Mucosa of descending colon (tissue), 3 donors: ENCODE measurements at regions of chr4 and their contacts with region 1.

Region 1: DNA sequence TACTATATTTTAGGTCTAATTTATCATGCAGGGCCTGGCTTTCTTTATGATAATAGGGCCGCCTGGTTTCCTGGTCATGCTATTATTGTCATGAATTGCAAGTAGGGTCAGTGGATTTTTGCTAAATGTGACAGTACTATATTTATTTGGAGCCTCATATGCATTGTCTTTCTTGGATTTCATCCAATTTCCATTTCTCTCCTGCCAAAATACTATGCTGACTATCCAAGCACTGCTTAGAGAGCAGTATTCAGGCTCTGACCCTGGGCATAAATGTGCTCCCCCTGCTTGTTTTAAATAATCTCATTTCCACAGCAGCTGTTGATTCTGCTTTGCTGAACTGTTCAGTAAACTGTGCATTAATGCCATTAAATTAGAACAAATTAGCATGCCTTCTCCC is 269.3 kb downstream of the GPM6A start:
- DNase-seq: no peak
- ATAC-seq: no peak
- H3K4me3 ChIP-seq: no peak overlapping the region
- H3K4me1 ChIP-seq: no peaks in the 10 kb centered on the region
- CTCF ChIP-seq: no peak

Region 2: DNA sequence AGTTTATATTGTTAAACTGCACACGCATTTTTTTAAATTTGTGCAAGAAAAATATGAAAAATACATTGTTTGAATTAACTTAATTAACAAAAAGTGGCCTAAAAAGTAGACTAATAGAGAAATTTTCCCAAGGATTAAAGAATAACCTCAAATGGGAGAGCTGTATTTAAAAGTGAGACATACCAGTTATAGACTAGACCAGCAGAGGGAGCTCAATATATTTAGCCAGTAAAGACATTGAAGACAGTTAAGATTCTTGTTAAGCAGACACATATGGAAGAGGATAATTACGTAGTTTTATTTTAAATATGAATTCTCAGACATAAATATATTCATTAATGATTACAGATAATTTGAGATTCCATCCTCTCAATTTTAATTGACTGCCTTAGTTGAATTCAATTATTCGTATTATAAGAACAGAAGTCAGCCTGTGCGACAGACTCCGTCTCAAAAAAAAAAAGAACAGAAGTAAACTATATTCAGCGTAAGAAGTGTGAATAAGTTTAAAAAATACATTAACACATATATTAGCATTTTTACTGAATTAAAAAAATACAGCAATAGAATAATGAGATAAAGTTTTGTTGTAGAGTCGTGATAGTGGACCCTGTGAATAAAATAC is 778.6 kb before region 1 on chr4:
- intact Hi-C with region 1: loop called in 1 of 2 experiments (anchors 10 kb)
- DNase-seq: peak in 1 of 3 donors; percentile 7
- ATAC-seq: peak; percentile 41
- H3K4me3 ChIP-seq: no peak overlapping the region
- H3K4me1 ChIP-seq: no peaks in the 10 kb centered on the region
- CTCF ChIP-seq: no peak

Region 3: DNA sequence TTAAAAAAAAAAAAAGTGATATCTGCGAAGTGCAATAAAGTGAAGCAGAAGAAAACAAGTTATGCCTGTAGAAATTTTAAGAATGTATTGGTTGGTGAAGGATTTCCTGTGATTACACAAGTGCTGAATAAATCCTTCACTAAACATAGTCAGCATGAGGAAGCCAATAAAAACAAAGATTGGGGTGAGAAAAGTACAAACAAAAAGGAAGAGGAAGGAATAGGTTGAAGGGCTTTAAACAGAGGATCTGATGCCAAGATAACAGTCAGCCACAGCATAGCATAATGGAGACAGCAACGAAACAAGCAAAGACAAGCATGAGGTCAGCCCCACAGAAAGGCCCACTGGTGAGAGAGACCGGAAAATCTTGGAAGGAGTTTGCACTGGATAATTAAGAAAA is 252.4 kb before region 1 on chr4:
- intact Hi-C with region 1: no loop called
- DNase-seq: no peak
- ATAC-seq: no peak
- H3K4me3 ChIP-seq: no peak overlapping the region
- H3K4me1 ChIP-seq: no peaks in the 10 kb centered on the region
- CTCF ChIP-seq: no peak

Region 4: DNA sequence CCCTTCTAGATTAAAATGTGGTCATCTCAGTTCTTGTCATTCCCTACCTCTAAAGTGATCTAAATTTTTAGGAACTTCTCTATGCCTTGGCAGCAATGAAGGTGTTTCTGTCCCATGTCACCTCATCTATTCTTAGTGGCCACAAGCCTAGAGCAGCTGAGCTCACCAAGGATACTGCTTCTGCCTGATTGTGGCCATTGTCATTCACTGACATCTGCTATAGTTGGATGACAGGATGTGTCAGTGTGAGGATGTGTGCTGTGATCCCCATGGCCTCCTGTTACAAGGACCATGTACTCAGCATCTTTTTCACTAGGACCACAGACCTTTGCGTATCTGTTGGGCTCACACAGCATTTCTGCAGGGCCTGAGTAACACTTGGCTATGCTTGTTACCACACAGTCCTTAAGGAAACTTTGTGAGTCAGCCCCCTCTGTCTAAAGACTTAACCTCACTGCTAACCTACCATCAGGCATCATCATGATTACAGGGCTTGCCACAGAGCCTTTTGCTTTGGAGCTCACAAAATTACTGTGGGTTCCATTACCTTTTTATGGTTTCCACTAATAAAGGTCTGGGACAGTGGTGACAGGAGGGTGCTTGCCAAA is 203.6 kb before region 1 on chr4:
- intact Hi-C with region 1: no loop called
- DNase-seq: no peak
- ATAC-seq: no peak
- H3K4me3 ChIP-seq: no peak overlapping the region
- H3K4me1 ChIP-seq: no peaks in the 10 kb centered on the region
- CTCF ChIP-seq: no peak

Region 5: DNA sequence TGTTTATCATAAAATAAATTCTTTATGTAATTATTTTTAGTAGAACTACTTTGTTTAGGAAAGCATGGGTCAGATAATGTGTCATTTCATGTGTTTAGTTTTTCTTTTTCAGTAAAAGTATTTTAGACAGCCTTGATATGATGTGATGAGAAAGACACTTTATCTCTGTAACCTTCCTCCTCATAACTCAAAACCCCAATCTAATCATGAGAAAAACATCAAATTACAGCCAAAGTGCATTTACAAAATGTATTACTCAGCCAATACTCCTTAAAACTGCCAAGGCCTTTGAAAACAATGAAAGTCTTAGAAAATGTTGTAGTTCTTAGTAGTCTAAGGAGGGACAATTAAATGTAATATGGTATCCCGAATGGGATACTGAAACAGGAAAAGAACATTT is 124.3 kb after region 1 on chr4:
- intact Hi-C with region 1: no loop called
- DNase-seq: no peak
- ATAC-seq: no peak
- H3K4me3 ChIP-seq: no peak overlapping the region
- H3K4me1 ChIP-seq: no peaks in the 10 kb centered on the region
- CTCF ChIP-seq: no peak